CD4-positive, alpha-beta T cell (primary cell): ENCODE measurements at regions of chr10 and their contacts with region 1.

Region 1: GRCh38 chr10:126696684-126697083 is 26.2 kb upstream of the C10orf90 start:
- DNase-seq: no peak
- ATAC-seq: no peak
- H3K4me3 ChIP-seq: no peak overlapping the region
- H3K4me3 Mint-ChIP-seq: no peak overlapping the region
- H3K27ac ChIP-seq: no peak overlapping the region
- H3K27ac Mint-ChIP-seq: no peak overlapping the region
- H3K4me1 ChIP-seq: no peaks in the 10 kb centered on the region
- H3K4me1 Mint-ChIP-seq: no peaks in the 10 kb centered on the region
- H3K27me3 ChIP-seq: no peaks in the 10 kb centered on the region
- H3K27me3 Mint-ChIP-seq: no peaks in the 10 kb centered on the region
- CTCF ChIP-seq: no peak

Region 2: DNA sequence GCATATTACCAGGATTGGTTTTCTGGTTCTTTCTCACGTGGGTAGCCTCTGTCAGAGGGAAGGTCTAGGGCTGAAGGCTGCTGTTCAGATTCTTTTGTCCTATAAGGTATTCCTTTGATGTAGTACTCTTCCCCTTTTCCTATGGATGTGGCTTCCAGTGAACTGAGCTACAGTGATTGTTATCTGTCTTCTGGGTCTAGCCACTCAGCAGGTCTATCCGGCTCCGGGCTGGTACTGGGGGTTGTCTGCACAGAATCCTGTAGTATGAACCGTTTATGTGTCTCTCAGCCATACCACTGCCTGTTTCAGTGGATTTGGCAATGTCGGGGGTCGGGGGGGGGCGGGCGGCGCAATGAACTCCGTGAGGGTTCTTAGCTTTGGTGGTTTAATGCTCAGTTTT is 58.3 kb after region 1 on chr10:
- CTCF ChIA-PET with region 1: no interaction called
- POLR2A ChIA-PET with region 1: no interaction called
- intact Hi-C with region 1: loop called in 1 of 2 experiments (anchors 10 kb)
- DNase-seq: no peak
- ATAC-seq: no peak
- H3K4me3 ChIP-seq: no peak overlapping the region
- H3K4me3 Mint-ChIP-seq: no peak overlapping the region
- H3K27ac ChIP-seq: no peak overlapping the region
- H3K27ac Mint-ChIP-seq: no peak overlapping the region
- H3K4me1 ChIP-seq: no peaks in the 10 kb centered on the region
- H3K4me1 Mint-ChIP-seq: no peaks in the 10 kb centered on the region
- H3K27me3 ChIP-seq: no peaks in the 10 kb centered on the region
- H3K27me3 Mint-ChIP-seq: peaks cover 5% of the 10 kb centered on the region
- CTCF ChIP-seq: no peak

Region 3: DNA sequence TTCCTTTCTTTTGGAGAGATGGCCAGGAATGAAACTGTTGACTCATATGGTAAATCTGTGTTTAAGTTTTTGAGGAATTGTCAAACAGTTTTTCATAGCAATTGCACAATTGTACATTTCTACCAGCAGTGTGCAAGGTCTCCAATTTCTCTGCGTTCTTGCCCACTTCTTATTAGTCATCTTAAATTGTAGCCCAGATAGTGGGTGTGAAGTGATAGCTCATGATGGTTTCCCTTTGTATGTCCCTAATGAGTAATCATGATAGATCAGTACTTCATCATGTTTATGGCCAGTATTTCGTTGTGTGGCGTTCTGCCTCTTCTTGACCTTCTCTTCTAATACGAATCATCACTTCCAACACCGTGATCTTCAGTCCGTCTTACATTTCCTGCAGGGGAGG is 344.9 kb after region 1 on chr10:
- CTCF ChIA-PET with region 1: no interaction called
- POLR2A ChIA-PET with region 1: no interaction called
- intact Hi-C with region 1: no loop called
- DNase-seq: no peak
- ATAC-seq: no peak
- H3K4me3 ChIP-seq: no peak overlapping the region
- H3K4me3 Mint-ChIP-seq: no peak overlapping the region
- H3K27ac ChIP-seq: no peak overlapping the region
- H3K27ac Mint-ChIP-seq: no peak overlapping the region
- H3K4me1 ChIP-seq: no peaks in the 10 kb centered on the region
- H3K4me1 Mint-ChIP-seq: no peaks in the 10 kb centered on the region
- H3K27me3 ChIP-seq: no peaks in the 10 kb centered on the region
- H3K27me3 Mint-ChIP-seq: no peaks in the 10 kb centered on the region
- CTCF ChIP-seq: no peak